Left cardiac atrium (tissue), 4 donors: ENCODE measurements at regions of chr12 and their contacts with region 1.

Region 1: GRCh38 chr12:57124259-57124877 is 3.9 kb upstream of the LRP1 start:
- DNase-seq: peak; percentile 75
- ATAC-seq: peak in 1 of 2 donors; percentile 10

Region 2: DNA sequence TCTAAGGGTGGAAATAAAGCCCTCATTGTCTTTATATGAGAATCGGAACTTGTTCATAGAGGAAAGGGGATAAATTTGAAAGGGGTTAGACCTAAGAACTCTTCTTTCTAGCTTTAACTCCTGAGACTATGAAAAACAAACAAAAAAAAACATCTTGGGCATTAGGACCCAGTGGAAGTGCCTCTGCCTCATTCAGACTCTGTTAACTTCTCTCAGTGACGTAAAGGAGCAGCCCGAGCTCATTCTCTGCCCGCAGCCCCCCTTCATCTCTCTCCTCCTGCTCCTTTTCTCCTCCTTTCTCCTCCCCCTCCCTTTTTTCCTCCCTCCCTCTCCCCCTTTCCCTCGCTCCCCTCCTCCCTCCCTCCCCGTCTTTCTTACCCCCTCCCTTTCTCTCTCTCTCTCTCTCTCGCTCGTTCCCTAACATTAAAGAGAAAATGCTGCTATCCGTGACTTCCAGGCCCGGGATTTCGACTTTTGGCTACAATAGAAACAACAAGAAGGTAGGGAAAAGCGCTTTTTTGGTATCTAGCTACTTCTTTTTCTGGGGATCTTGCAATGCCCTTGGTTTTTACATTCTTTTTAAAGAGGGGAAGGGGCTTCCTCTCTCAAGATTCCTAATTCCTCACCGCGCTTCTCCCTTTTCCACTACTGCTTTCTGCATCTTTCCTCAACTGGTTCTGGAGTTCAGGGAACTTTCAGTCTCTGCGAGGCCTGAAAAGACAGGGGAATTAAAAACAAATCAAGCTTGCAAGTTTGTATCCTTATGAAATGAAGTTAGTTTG is 602.6 kb before region 1 on chr12 and contains the start of gene RBMS2:
- intact Hi-C with region 1: no loop called
- DNase-seq: peak; percentile 82
- ATAC-seq: peak; percentile 96 to 98
- total RNA-seq, gene RBMS2: 32.6 to 40.7 TPM

Region 3: DNA sequence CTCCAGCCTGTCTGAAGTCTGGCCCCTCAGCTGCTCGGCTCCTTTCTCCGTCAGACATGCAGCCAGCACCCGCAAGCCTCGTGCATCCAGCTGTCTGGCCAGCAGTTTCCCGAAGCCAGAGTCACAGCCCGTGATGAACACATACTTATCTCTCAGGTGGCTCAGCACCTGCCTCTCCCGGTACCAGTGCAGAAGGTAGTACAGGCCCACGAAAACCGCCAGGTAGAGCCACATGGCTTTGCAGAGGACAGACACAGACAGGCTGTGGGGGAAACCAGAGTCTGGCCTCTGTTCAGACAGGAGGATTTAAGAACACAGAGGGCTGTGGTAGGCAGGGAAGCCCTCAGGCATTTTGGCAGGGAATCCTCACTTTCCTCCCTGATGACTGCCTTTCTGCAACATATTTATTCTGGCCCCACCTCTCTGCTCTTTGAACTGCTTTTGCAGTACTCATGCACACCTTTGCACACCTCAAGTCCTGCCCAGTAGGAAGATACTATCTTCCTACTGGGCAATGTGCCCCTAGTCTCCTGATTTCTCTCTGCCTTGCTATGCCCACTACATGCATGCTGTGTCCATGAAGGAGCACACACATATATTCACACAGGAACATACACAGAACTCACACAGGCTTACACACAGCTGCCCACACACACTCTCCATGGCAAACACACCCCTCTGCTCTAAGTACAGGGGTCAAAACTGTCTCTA is 167.0 kb before region 1 on chr12 and contains the start of gene RDH16:
- intact Hi-C with region 1: no loop called
- DNase-seq: no peak
- ATAC-seq: no peak
- total RNA-seq, gene RDH16: 0.27 to 0.29 TPM

Region 4: GRCh38 chr12:57175428-57176138 is 51.2 kb after region 1 on chr12:
- intact Hi-C with region 1: loop called (anchors 2 to 5 kb)
- DNase-seq: peak; percentile 83
- ATAC-seq: peak; percentile 38 to 56

Region 5: GRCh38 chr12:57182921-57183790 is 58.8 kb after region 1 on chr12:
- intact Hi-C with region 1: loop called (anchors 2 to 5 kb)
- DNase-seq: peak; percentile 70
- ATAC-seq: peak; percentile 75 to 83

Region 6: DNA sequence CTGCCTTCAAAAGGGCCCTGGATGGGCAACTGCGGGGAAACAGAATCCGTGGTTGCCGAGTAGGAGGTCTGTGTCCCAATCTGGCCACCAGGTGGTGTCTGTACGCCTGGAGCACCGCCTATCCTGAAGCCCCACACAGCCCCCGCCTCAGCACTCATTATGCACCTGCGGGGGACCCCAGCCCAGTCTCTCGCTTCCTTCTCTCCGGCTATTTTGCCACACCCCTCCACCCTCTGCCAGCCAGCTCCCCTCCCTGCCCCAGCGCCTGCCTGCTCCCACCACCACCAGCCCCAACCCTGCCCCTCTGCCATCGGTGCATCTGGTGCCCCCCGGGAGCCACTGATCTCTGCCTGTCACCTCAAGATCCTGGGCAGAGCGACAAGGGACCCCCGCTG is 90.0 kb after region 1 on chr12:
- intact Hi-C with region 1: no loop called
- DNase-seq: peak; percentile 72
- ATAC-seq: peak; percentile 39 to 50